ENCODE measurements at regions of chr13 and their contacts with region 1.

Region 1: GRCh38 chr13:75372517-75372916 is 109.5 kb downstream of the TBC1D4 start:
- DNase-seq: no peak
- ATAC-seq: peak; percentile 39 to 49

Region 2: GRCh38 chr13:75482070-75482819 is 109.7 kb after region 1 on chr13 and contains the start of gene TBC1D4:
- intact Hi-C with region 1: loop called (anchors 5 to 10 kb)
- DNase-seq: peak; percentile 89
- ATAC-seq: peak; percentile 84 to 91
- total RNA-seq, gene TBC1D4: 47.7 to 54.2 TPM

Region 3: GRCh38 chr13:75537401-75538365 is 165.2 kb after region 1 on chr13 and contains the start of gene COMMD6:
- intact Hi-C with region 1: loop called in 1 of 2 experiments (anchors 5 kb)
- DNase-seq: peak; percentile 86
- ATAC-seq: peak; percentile 97 to 99
- total RNA-seq, gene COMMD6: 118 to 133 TPM

Region 4: DNA sequence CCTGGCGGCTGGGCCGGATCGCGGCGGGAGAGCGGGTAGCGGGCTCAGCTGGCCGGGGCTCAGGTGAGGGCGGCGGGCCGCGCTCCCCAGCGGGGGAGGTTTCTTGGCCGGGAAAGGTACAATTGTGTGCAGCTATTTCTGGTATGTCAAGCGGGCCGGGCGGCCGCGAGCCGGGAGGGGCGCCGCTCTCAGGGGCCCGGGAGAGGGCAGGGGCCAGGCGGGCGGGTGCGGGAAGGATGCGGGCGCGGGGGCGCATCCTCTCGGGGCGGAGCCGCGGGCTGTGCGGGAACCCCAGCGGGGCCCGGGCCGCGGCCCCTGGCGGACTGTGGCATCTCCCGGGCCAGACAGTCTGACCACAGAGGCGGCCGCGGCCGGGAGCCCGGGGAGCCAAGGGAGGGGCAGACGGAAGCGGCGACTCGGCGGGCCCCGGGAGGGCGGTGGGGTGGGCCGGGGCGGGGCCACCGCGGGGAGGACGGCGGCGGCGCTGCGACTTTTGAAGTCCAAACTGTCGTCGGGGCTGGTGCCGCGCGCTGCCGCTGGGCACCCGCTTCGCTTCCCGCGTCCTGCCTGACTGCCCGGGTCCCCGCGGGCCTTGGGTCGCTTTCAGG is 263.4 kb after region 1 on chr13 and contains the start of gene LMO7:
- intact Hi-C with region 1: no loop called
- DNase-seq: peak; percentile 48
- ATAC-seq: peak; percentile 83 to 87
- total RNA-seq, gene LMO7: 262 to 273 TPM